ENCODE measurements at regions of chr19 and their contacts with region 1.

Region 1: DNA sequence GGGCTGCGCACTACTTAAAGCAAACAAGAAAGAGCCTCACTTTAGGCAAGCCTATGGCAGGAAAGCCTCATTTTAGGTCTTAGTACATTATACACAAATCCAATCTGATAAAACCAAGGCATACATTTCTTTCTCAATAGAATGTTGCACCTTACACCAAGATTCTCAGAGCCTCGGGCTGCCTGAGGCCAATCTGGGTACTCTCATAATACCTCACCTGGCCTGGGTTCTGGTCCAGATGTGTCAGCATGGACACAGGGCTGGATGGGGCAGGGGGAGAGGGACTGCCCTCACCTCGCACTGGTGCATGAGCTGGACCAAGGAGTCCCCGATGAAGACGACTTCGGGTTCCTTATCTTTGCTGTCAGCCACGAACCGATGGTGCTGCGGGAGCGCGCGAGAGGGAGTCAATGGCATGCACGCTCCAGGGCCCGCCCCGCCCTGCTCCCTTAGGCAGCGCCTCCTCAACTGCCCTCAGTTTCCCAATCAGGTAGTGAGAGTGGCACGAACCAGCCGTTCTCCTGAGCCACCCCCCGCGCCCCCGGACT is at the start of gene PRR19:
- DNase-seq: peak in 1 of 9 experiments; percentile 46
- ATAC-seq: peak; percentile 5
- H3K4me3 ChIP-seq: peak within 1 kb of the TSS; percentile 88 to 89
- H3K4me3 Mint-ChIP-seq: peak within 1 kb of the TSS; percentile 87
- H3K27ac ChIP-seq: peak within 1 kb of the TSS; percentile 37 to 56
- H3K27ac Mint-ChIP-seq: peak within 1 kb of the TSS; percentile 49
- H3K4me1 ChIP-seq: peaks cover 19% of the 10 kb centered on the region
- H3K4me1 Mint-ChIP-seq: peaks cover 28% of the 10 kb centered on the region
- H3K27me3 ChIP-seq: no peaks in the 10 kb centered on the region
- H3K27me3 Mint-ChIP-seq: no peaks in the 10 kb centered on the region
- CTCF ChIP-seq: no peak
- total RNA-seq, gene PRR19: 0.19 TPM in 1 of 2 experiments, not detected in the other

Region 2: GRCh38 chr19:42254989-42255765 is 46.6 kb before region 1 on chr19 and contains the start of gene ERF:
- CTCF ChIA-PET with region 1: no interaction called
- POLR2A ChIA-PET with region 1: no interaction called
- intact Hi-C with region 1: loop called in 1 of 2 experiments (anchors 1 kb)
- DNase-seq: peak; percentile 89 to 97 (median 93)
- ATAC-seq: peak; percentile 71
- H3K4me3 ChIP-seq: peak within 1 kb of the TSS; percentile 85 to 97
- H3K4me3 Mint-ChIP-seq: peak within 1 kb of the TSS; percentile 86
- H3K27ac ChIP-seq: peak within 1 kb of the TSS; percentile 96 to 97
- H3K27ac Mint-ChIP-seq: peak within 1 kb of the TSS; percentile 87
- H3K4me1 ChIP-seq: peaks cover 36% of the 10 kb centered on the region
- H3K4me1 Mint-ChIP-seq: peaks cover 27% of the 10 kb centered on the region
- H3K27me3 ChIP-seq: no peaks in the 10 kb centered on the region
- H3K27me3 Mint-ChIP-seq: no peaks in the 10 kb centered on the region
- CTCF ChIP-seq: no peak
- total RNA-seq, gene ERF: 92.1 to 95.1 TPM